Colonic mucosa (tissue), 4 donors: ENCODE measurements at regions of chr11 and their contacts with region 1.

Region 1: DNA sequence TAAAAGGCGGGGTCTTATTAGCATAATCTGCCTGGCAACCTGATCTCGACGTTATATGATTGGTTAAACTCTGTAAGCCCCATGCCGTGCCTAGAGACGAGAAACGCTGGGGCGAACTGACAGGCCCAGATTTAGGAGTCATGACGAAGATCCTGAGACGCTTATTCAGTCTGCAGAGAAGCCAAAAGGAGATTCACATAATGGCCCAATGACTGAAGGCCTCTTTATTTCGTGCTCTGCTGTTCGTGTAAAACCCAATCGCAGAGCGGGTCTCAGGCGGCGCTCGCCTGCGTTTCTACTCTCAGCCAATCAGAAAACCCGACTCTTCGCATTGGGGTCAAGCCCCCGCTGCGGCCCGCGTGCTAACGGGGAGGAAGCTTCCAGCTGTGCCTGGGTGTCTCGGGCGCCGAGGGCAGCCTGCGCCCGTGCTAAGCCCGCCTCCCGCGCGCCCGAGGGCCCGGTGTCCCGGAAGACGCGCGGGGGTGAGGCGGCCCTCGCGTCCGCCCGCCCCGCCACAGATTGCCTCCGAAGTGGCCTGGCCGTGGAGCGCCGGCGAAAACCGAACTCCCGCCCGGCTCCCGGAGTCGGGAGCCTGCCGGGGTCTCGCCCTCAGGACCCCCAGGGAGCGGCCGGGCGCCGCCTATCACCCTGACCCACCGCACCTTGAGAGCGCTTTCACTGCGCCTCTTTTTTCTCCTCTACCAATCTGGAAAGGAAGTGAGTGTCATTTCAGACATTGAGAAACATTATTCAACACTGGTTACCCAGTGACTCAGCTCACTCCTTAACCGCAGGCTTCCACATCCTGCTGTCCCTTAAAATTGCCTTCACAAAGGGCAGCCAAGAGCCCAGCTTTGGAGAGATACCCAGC is 446 bp upstream of the PRDM10 start:
- DNase-seq: peak; percentile 96
- H3K4me3 ChIP-seq: peak overlapping the region; percentile 66
- H3K27ac ChIP-seq: peak overlapping the region; percentile 99
- H3K4me1 ChIP-seq: peaks cover 7% of the 10 kb centered on the region
- H3K27me3 ChIP-seq: no peaks in the 10 kb centered on the region
- CTCF ChIP-seq: no peak

Region 2: DNA sequence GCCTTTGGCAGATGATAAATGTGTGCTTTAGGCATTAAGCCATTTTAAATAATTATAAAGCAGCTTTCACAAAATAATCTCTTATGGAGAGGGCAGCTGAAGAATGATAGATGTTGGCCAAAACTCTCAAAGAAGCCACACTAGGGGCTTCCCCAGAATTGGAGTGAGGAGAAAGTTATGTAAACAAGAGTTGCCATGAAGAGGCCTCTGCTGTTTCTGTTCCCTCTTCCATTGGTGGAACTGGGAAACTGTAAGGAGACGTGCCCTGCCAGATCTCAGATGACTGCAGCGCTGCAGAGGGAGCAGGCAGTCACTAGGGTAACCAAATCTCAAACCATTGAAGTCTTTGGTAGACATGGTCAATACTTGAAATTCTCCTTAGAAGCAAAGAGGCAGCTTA is 47.2 kb after region 1 on chr11:
- intact Hi-C with region 1: no loop called
- DNase-seq: no peak
- H3K4me3 ChIP-seq: no peak overlapping the region
- H3K27ac ChIP-seq: no peak overlapping the region
- H3K4me1 ChIP-seq: no peaks in the 10 kb centered on the region
- H3K27me3 ChIP-seq: no peaks in the 10 kb centered on the region
- CTCF ChIP-seq: no peak

Region 3: GRCh38 chr11:130069684-130070108 is 66.6 kb after region 1 on chr11 and contains the start of gene APLP2:
- intact Hi-C with region 1: loop called (anchors 2 kb)
- DNase-seq: peak; percentile 100
- H3K4me3 ChIP-seq: peak within 1 kb of the TSS; percentile 75
- H3K27ac ChIP-seq: peak within 1 kb of the TSS; percentile 98
- H3K4me1 ChIP-seq: no peaks in the 10 kb centered on the region
- H3K27me3 ChIP-seq: no peaks in the 10 kb centered on the region
- CTCF ChIP-seq: no peak
- total RNA-seq, gene APLP2: 285 to 388 TPM